ENCODE measurements at regions of chr14 and their contacts with region 1.

Region 1: DNA sequence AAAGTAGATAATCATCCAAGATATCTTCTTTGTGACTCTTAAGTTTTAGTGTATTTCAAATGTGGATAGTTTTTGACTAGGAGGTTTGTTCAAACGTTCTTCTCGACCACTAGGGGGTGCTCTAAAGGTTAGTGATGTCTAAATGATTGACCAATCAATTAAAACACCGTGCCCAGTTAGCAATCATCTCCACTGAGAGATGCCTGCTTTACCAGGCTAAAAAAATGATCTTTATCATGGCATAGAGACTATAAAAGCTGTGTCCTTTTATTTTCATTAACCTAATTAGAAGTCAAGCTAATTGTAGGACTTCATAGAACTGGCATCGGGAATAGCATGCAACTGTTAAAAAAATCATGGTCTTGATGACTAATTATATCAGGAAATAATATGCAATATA is 153.9 kb downstream of the PRKCH start:
- DNase-seq: no peak
- H3K4me3 ChIP-seq: no peak overlapping the region
- H3K27ac ChIP-seq: peak overlapping the region; percentile 78 to 87
- H3K4me1 ChIP-seq: peaks cover 52% of the 10 kb centered on the region
- H3K27me3 ChIP-seq: no peaks in the 10 kb centered on the region
- CTCF ChIP-seq: peak; percentile 67 to 78 (median 72)
- POLR2A ChIP-seq: no peak

Region 2: GRCh38 chr14:61730756-61731373 is 255.5 kb after region 1 on chr14:
- intact Hi-C with region 1: loop called (anchors 10 kb)
- DNase-seq: no peak
- H3K4me3 ChIP-seq: no peak overlapping the region
- H3K27ac ChIP-seq: no peak overlapping the region
- H3K4me1 ChIP-seq: no peaks in the 10 kb centered on the region
- H3K27me3 ChIP-seq: no peaks in the 10 kb centered on the region
- CTCF ChIP-seq: peak in 2 of 3 experiments; percentile 25 to 43
- POLR2A ChIP-seq: no peak